Activated B cell treated with CpG ODN at 0.5 μM for 24 hours (primary cell): ENCODE measurements at regions of chr4 and their contacts with region 1.

Region 1: DNA sequence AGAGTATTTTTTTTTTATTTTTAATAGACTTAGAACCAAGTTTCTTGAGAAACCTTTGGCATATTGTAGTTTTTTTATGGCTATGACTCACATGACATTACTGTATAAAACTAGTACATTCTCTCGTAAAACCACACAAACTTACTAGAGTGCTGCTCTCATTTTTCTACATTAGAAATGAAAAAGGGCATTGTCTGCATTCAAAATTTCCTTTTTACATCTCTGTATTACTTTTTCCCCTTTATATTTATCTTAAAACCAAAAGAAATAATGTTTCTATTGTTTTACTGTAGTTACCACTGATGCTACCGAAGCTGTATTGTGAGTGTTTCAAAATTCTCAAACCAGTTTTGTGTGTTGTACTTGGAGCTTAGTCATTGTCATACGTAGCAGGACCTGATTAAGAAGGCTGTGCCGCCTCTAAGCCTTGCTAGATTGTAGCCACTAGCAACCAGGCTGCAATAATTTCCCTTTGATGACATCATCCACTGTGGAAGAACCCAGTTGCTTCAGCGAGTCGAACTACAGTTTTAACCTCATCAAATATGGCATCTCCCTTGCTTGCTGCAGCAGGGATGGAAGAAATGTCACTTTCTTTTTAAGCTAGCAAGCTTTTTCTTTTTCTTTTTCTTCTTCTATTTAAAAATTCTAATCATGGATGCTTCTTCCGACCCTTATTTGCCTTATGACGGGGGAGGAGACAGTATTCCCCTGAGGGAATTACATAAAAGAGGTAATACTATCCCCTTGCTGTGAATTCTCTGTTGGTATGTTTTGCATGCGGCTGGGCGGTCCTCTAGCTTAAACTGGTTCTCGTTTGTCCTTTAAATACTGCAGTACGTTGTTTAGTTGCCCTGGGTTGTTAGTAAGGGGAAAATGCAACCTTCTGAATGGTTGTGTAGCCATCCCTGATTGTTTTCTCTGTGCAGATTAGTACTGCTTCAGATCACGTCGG is 39.6 kb downstream of the CLCN3 start:
- DNase-seq: peak; percentile 28
- ATAC-seq: peak; percentile 92
- H3K4me3 Mint-ChIP-seq: peak overlapping the region; percentile 83
- H3K27ac Mint-ChIP-seq: peak overlapping the region; percentile 95
- H3K4me1 Mint-ChIP-seq: peaks cover 22% of the 10 kb centered on the region
- H3K27me3 Mint-ChIP-seq: no peaks in the 10 kb centered on the region
- CTCF ChIP-seq: no peak

Region 2: GRCh38 chr4:168318266-168318895 is 1341.6 kb before region 1 on chr4 and contains the start of gene DDX60:
- CTCF ChIA-PET with region 1: no interaction called
- POLR2A ChIA-PET with region 1: no interaction called
- intact Hi-C with region 1: loop called (anchors 1 kb)
- DNase-seq: peak; percentile 68
- ATAC-seq: peak; percentile 92
- H3K4me3 Mint-ChIP-seq: peak within 1 kb of the TSS; percentile 95
- H3K27ac Mint-ChIP-seq: peak within 1 kb of the TSS; percentile 96
- H3K4me1 Mint-ChIP-seq: peaks cover 20% of the 10 kb centered on the region
- H3K27me3 Mint-ChIP-seq: no peaks in the 10 kb centered on the region
- CTCF ChIP-seq: no peak
- total RNA-seq, gene DDX60: 17.6 and 17.9 TPM in 2 replicates

Region 3: GRCh38 chr4:169362607-169363006 is 297.4 kb before region 1 on chr4:
- CTCF ChIA-PET with region 1: no interaction called
- POLR2A ChIA-PET with region 1: no interaction called
- intact Hi-C with region 1: no loop called
- DNase-seq: no peak
- ATAC-seq: no peak
- H3K4me3 Mint-ChIP-seq: no peak overlapping the region
- H3K27ac Mint-ChIP-seq: no peak overlapping the region
- H3K4me1 Mint-ChIP-seq: peaks cover 2% of the 10 kb centered on the region
- H3K27me3 Mint-ChIP-seq: peaks cover 4% of the 10 kb centered on the region
- CTCF ChIP-seq: no peak

Region 4: DNA sequence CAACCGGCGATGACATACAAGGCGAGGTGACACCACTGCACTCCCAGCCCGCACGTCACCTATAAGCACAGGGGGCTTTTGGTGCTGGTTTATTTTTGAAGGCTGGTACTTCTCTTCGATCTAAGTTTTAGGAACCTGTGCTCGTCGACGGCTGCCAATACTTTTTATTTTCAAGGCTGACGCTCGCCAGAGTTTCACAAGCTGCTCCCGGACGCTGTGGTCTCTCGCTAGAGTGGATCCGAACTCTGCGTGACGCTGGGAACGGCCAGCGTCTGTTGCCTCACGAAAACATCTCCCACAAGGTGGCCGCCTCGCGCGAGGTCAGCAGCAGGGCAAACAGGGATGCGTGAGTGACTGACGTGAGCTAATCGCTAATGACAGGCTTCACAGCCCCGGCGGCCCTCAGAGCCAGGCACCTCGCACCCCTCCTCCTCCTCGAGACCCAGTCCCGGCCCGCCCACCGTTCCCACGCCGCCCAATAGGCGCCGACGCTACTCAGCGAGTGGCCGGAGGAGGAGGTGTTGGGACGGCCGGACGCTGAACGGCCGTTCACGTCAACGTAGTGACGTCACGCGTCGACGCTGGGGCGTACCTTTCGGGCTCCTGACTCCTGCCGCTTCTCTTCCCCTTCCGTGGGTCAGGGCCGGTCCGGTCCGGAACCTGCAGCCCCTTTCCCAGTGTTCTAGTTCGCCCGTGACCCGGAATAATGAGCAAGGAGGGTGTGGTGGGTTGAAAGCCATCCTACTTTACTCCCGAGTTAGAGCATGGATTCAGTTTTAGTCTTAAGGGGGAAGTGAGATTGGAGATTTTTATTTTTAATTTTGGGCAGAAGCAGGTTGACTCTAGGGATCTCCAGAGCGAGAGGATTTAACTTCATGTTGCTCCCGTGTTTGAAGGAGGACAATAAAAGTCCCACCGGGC is 39.8 kb before region 1 on chr4 and contains the start of gene CLCN3:
- CTCF ChIA-PET with region 1: interaction called, 22 read pairs
- POLR2A ChIA-PET with region 1: interaction called, 52 read pairs
- intact Hi-C with region 1: loop called (anchors 1 kb)
- DNase-seq: peak; percentile 92
- ATAC-seq: peak; percentile 93
- H3K4me3 Mint-ChIP-seq: peak within 1 kb of the TSS; percentile 100
- H3K27ac Mint-ChIP-seq: peak within 1 kb of the TSS; percentile 99
- H3K4me1 Mint-ChIP-seq: peaks cover 41% of the 10 kb centered on the region
- H3K27me3 Mint-ChIP-seq: no peaks in the 10 kb centered on the region
- CTCF ChIP-seq: no peak
- total RNA-seq, gene CLCN3: 23.0 and 28.6 TPM in 2 replicates

Region 5: DNA sequence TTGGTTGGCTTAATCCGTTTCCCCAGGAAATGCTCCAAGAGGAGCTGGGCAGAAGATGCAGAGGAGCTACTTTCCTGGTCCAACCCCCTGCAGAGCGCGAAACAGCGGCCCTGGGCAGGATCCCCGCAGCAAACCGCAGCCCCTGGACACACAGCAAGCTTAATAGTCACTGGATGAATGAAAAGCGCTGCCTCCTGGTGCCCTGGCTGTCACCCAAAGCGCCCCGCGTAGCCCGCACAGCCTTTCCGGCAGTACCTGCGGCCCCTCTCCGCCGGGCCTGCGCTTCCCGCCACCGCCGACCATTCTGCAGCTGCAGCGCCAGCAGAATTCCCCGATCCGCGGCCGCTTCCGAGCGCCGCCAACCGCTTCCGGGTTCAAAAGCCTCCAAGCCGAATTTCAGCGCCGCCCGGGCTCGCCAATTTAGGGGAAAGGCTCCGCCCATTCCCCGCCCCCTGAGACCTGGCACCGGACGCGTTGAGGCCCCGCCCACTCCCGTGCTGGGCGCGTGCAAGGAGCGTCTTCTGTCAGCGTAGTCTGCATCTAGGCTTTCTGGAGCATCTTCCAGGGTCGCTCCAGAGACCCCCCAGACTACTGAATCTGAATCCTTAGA is 97.7 kb after region 1 on chr4 and contains the start of gene HPF1:
- CTCF ChIA-PET with region 1: no interaction called
- POLR2A ChIA-PET with region 1: interaction called, 3 read pairs
- intact Hi-C with region 1: loop called (anchors 2 kb)
- DNase-seq: peak; percentile 85
- ATAC-seq: peak; percentile 95
- H3K4me3 Mint-ChIP-seq: peak within 1 kb of the TSS; percentile 92
- H3K27ac Mint-ChIP-seq: peak within 1 kb of the TSS; percentile 68
- H3K4me1 Mint-ChIP-seq: peaks cover 23% of the 10 kb centered on the region
- H3K27me3 Mint-ChIP-seq: no peaks in the 10 kb centered on the region
- CTCF ChIP-seq: no peak
- total RNA-seq, gene HPF1: 17.9 and 19.5 TPM in 2 replicates

Region 6: GRCh38 chr4:170027181-170027829 is 367.3 kb after region 1 on chr4:
- CTCF ChIA-PET with region 1: no interaction called
- POLR2A ChIA-PET with region 1: no interaction called
- intact Hi-C with region 1: loop called (anchors 2 kb)
- DNase-seq: peak; percentile 86
- ATAC-seq: peak; percentile 76
- H3K4me3 Mint-ChIP-seq: peak overlapping the region; percentile 89
- H3K27ac Mint-ChIP-seq: peak overlapping the region; percentile 47
- H3K4me1 Mint-ChIP-seq: peaks cover 13% of the 10 kb centered on the region
- H3K27me3 Mint-ChIP-seq: peaks cover 21% of the 10 kb centered on the region
- CTCF ChIP-seq: no peak